ENCODE measurements at regions of chr2 and their contacts with region 1.

Region 1: GRCh38 chr2:201451292-201452057 is at the starts of genes STRADB and TRAK2:
- DNase-seq: peak; percentile 99
- H3K4me3 Mint-ChIP-seq: peak within 1 kb of the TSS; percentile 95
- H3K27ac Mint-ChIP-seq: peak within 1 kb of the TSS; percentile 97
- H3K4me1 Mint-ChIP-seq: peaks cover 42% of the 10 kb centered on the region
- H3K27me3 Mint-ChIP-seq: peaks cover 8% of the 10 kb centered on the region
- total RNA-seq, gene STRADB: 18.5 and 20.1 TPM in 2 replicates
- total RNA-seq, gene TRAK2: 26.5 and 29.1 TPM in 2 replicates

Region 2: GRCh38 chr2:200778038-200778437 is 673.4 kb before region 1 on chr2:
- intact Hi-C with region 1: no loop called
- DNase-seq: no peak
- H3K4me3 Mint-ChIP-seq: no peak overlapping the region
- H3K27ac Mint-ChIP-seq: no peak overlapping the region
- H3K4me1 Mint-ChIP-seq: no peaks in the 10 kb centered on the region
- H3K27me3 Mint-ChIP-seq: peaks cover 3% of the 10 kb centered on the region

Region 3: GRCh38 chr2:201406077-201406662 is 45.3 kb before region 1 on chr2:
- intact Hi-C with region 1: loop called (anchors 1 kb)
- DNase-seq: no peak
- H3K4me3 Mint-ChIP-seq: no peak overlapping the region
- H3K27ac Mint-ChIP-seq: peak overlapping the region; percentile 40
- H3K4me1 Mint-ChIP-seq: peaks cover 35% of the 10 kb centered on the region
- H3K27me3 Mint-ChIP-seq: no peaks in the 10 kb centered on the region

Region 4: GRCh38 chr2:201432038-201432620 is 19.3 kb before region 1 on chr2:
- intact Hi-C with region 1: loop called (anchors 1 kb)
- DNase-seq: peak; percentile 62
- H3K4me3 Mint-ChIP-seq: peak overlapping the region; percentile 77
- H3K27ac Mint-ChIP-seq: peak overlapping the region; percentile 95
- H3K4me1 Mint-ChIP-seq: peaks cover 28% of the 10 kb centered on the region
- H3K27me3 Mint-ChIP-seq: no peaks in the 10 kb centered on the region

Region 5: DNA sequence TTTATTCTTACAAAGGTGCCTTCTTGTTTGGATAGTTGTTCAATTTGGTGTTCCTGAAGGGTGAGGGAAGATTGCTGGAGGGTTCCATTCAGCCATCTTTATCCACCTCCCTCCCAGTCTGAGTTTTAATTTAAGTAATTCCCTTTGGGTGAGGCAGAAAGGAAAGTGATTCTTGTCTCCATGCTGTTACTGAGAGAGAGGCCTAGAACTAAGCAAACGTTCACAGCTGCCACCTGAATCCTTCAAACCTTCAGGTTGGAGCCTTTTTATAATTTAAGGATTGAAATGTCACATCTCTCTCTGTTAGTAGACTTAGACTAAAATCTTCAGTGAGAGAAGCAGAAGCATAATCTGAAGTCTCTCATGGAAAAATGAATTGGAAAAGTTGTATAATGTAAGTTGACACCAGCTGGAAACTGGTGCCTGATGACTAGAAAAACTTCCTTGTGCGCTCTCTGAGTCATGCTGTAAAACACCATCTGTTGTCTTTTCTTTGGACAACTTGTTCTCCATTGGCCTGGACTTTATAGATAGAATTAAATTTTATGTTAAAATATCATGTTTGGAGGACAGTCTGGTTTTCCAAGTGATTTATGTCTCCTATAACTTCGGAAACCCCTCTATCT is 14.7 kb after region 1 on chr2:
- intact Hi-C with region 1: no loop called
- DNase-seq: no peak
- H3K4me3 Mint-ChIP-seq: no peak overlapping the region
- H3K27ac Mint-ChIP-seq: no peak overlapping the region
- H3K4me1 Mint-ChIP-seq: peaks cover 5% of the 10 kb centered on the region
- H3K27me3 Mint-ChIP-seq: no peaks in the 10 kb centered on the region

Region 6: GRCh38 chr2:201780674-201781581 is 329.5 kb after region 1 on chr2 and contains the start of gene ALS2:
- intact Hi-C with region 1: loop called (anchors 1 kb)
- DNase-seq: peak; percentile 99
- H3K4me3 Mint-ChIP-seq: peak within 1 kb of the TSS; percentile 95
- H3K27ac Mint-ChIP-seq: peak within 1 kb of the TSS; percentile 92
- H3K4me1 Mint-ChIP-seq: peaks cover 22% of the 10 kb centered on the region
- H3K27me3 Mint-ChIP-seq: peaks cover 20% of the 10 kb centered on the region
- total RNA-seq, gene ALS2: 10.7 and 11.3 TPM in 2 replicates

Region 7: DNA sequence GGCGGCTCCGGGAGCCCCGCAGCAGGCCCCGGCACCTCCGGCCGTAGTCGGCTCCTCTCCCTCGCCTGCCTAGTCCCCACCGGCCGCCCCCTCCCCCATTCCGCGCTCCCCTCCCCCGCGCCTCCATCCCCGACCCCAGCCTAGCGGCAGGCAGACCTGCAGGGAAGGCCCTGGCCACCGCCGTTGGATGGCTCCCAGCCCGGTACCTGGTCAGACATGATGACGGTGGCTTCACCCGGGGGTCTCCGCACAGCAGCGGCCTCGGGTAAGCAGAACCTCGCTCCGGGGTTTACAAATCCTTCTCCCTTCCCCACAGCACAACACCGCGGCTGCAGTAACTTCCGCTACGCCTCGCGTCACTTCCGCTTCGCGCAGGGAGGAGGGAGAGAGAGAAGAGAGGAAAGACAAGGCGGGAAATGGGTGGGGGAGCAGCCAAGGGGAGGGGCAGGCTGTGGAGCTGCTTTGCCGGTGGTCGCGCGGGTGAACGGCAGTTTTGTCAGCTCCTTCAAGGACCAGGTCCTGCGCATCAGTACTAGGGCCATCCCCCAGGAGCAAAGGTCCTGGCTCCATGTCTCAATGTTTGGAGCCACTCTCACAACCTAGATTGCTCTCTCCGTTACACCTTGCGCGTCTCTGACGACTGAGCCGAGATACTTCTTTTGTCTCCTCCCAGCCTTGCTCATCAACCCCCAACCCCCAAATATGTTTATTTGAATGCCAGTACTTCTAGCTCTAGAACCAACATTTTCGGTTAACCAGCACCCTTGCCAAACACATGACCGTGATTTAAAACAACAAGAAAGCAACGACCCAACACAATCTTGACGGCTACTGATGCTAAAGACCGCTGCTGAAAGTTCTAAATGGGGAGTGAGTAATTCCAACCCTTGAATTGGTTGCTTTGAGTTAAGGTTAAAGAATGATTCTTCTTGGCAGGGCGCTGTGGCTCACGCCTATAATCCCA is 787.0 kb after region 1 on chr2 and contains the start of gene SUMO1:
- intact Hi-C with region 1: loop called (anchors 1 kb)
- DNase-seq: peak; percentile 98
- H3K4me3 Mint-ChIP-seq: peak within 1 kb of the TSS; percentile 94
- H3K27ac Mint-ChIP-seq: peak within 1 kb of the TSS; percentile 92
- H3K4me1 Mint-ChIP-seq: peaks cover 16% of the 10 kb centered on the region
- H3K27me3 Mint-ChIP-seq: no peaks in the 10 kb centered on the region
- total RNA-seq, gene SUMO1: 121 and 127 TPM in 2 replicates